Esophagus muscularis mucosa (tissue), 4 donors: ENCODE measurements at regions of chr2 and their contacts with region 1.

Region 1: GRCh38 chr2:232521959-232522622 is 1.9 kb downstream of the PRSS56 start:
- DNase-seq: no peak
- H3K4me3 ChIP-seq: peak overlapping the region; percentile 40 to 52 (median 42)
- H3K27ac ChIP-seq: no peak overlapping the region
- H3K4me1 ChIP-seq: peaks cover 31 to 43% (median 38%) of the 10 kb centered on the region in 4 donors
- H3K27me3 ChIP-seq: peaks cover 6 to 95% (median 44%) of the 10 kb centered on the region in 4 donors
- CTCF ChIP-seq: peak; percentile 83 to 98 (median 92)
- EP300 ChIP-seq: no peak
- POLR2A ChIP-seq: no peak

Region 2: GRCh38 chr2:232438951-232439757 is 82.9 kb before region 1 on chr2:
- intact Hi-C with region 1: loop called (anchors 2 kb)
- DNase-seq: no peak
- H3K4me3 ChIP-seq: no peak overlapping the region
- H3K27ac ChIP-seq: no peak overlapping the region
- H3K4me1 ChIP-seq: no peaks in the 10 kb centered on the region
- H3K27me3 ChIP-seq: peaks cover 0 to 8% (median 0%) of the 10 kb centered on the region in 4 donors
- CTCF ChIP-seq: peak; percentile 27 to 69 (median 33)
- EP300 ChIP-seq: no peak
- POLR2A ChIP-seq: no peak

Region 3: GRCh38 chr2:232568161-232568560 is 46.1 kb after region 1 on chr2:
- intact Hi-C with region 1: no loop called
- DNase-seq: no peak
- H3K4me3 ChIP-seq: no peak overlapping the region
- H3K27ac ChIP-seq: no peak overlapping the region
- H3K4me1 ChIP-seq: peaks cover 0 to 3% (median 0%) of the 10 kb centered on the region in 4 donors
- H3K27me3 ChIP-seq: no peaks in the 10 kb centered on the region
- CTCF ChIP-seq: no peak
- EP300 ChIP-seq: no peak
- POLR2A ChIP-seq: no peak